ENCODE measurements at regions of chr20 and their contacts with region 1.

Region 1: DNA sequence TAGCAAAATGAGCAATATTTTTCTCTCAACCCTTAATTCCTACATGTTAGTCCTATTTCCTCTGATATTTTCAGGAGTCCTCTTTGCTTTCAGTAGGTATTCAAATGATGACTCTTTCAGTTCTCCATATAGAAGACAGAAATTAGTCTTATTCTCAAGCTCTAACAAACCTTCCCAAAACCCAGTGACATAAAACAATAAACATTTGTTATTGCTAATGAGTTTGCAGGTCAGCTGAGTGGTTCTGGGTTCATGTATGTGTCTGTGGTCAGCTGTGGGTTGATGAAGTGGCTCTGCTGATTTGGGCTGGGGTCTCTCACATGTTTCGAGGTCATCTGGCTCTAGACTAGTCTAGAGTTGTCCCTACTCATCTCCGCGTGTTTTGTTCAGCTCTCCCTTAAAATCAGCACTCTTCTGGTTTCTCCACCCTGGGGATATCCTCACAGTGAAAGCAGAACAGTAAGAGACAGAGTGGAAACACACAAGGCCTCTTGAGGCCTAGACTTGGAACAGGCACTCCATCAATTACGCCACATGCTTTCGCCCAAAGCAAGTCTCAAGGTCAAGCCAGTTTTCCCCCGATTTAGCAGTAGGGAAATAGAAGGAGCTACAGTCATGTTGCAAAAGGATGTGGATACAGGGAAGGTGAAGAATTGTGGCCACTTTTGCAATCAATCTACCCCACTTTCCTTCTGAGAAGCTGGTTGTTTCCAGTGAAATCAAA is 273.0 kb downstream of the PLCB1 start:
- DNase-seq: no peak
- H3K4me3 Mint-ChIP-seq: no peak overlapping the region
- H3K27ac Mint-ChIP-seq: no peak overlapping the region
- H3K4me1 Mint-ChIP-seq: peaks cover 3% of the 10 kb centered on the region
- H3K27me3 Mint-ChIP-seq: no peaks in the 10 kb centered on the region

Region 2: DNA sequence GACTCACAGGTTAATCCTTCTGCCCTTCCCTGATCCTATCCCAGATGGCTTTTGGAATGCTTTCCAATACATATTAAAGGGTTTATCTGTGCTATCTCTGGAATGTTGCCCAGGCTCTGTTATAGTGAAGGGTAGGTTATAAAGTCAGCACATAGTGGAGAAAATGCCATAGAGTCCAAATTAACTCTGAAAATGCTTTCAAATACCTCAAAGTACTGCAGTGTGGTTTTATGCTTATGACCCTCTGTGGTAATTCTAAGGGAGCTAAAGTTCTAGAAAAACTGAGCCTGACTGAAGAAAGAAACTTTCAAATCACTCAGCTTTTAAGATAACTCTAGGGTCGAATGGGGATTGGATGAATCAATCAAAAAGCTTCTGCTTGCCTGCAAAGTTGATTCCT is 113.2 kb before region 1 on chr20:
- intact Hi-C with region 1: no loop called
- DNase-seq: no peak
- H3K4me3 Mint-ChIP-seq: no peak overlapping the region
- H3K27ac Mint-ChIP-seq: no peak overlapping the region
- H3K4me1 Mint-ChIP-seq: no peaks in the 10 kb centered on the region
- H3K27me3 Mint-ChIP-seq: no peaks in the 10 kb centered on the region

Region 3: GRCh38 chr20:8454137-8454712 is 49.2 kb after region 1 on chr20:
- intact Hi-C with region 1: loop called (anchors 5 kb)
- DNase-seq: no peak
- H3K4me3 Mint-ChIP-seq: no peak overlapping the region
- H3K27ac Mint-ChIP-seq: peak overlapping the region; percentile 9
- H3K4me1 Mint-ChIP-seq: peaks cover 5% of the 10 kb centered on the region
- H3K27me3 Mint-ChIP-seq: no peaks in the 10 kb centered on the region